Heart right ventricle (tissue), 16 donors: ENCODE measurements at regions of chr7 and their contacts with region 1.

Region 1: DNA sequence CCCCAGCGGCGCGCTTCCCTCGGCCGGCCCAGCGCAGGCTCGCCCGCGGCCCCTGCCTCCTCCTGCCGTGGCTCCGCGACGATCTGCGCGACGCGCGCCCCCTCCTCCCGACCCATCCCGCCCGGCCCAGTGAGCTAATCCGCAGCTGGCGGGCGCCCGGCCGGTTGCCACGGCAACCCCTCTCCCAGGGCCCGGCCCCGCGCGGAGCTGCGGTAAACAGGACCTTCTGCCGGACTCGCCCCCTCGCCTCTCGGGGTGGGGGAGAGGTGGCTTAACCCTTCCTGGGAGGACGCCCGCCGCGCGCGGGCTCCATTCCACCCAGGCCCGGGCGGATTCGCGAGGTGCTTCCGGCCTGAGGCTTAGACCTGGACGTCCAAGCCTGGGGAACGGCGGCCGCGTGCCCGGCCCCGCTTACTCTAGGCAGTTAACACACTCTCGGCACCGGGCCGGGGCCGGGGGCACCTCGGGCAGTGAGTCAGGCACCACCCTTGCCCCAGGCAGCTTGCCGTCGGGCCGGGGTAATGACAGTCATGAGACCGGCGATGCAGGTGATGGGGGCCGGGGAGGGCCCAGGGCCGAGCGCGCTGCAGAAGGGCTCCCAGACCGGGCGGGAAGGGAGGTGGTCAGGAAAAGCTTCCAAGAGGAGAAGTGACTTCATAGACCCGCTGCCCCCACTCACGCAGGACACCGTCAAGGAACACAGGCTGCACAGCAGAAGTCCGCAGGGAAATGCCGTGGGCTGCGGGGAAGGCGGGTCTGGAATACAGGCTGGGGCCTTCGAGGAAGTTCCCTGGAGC is at the start of gene DENND2A:
- DNase-seq: peak; percentile 82 to 87
- ATAC-seq: peak; percentile 60 to 81 (median 75)
- H3K4me3 ChIP-seq: peak within 1 kb of the TSS; percentile 62 to 82 (median 70)
- H3K27ac ChIP-seq: peak within 1 kb of the TSS; percentile 88 to 98 (median 93)
- H3K4me1 ChIP-seq: peaks cover 5 to 55% (median 38%) of the 10 kb centered on the region in 9 donors
- H3K27me3 ChIP-seq: peaks cover 0 to 60% (median 7%) of the 10 kb centered on the region in 7 donors
- CTCF ChIP-seq: no peak
- total RNA-seq, gene DENND2A: 6.9 to 16.9 (median 10.4) TPM

Region 2: DNA sequence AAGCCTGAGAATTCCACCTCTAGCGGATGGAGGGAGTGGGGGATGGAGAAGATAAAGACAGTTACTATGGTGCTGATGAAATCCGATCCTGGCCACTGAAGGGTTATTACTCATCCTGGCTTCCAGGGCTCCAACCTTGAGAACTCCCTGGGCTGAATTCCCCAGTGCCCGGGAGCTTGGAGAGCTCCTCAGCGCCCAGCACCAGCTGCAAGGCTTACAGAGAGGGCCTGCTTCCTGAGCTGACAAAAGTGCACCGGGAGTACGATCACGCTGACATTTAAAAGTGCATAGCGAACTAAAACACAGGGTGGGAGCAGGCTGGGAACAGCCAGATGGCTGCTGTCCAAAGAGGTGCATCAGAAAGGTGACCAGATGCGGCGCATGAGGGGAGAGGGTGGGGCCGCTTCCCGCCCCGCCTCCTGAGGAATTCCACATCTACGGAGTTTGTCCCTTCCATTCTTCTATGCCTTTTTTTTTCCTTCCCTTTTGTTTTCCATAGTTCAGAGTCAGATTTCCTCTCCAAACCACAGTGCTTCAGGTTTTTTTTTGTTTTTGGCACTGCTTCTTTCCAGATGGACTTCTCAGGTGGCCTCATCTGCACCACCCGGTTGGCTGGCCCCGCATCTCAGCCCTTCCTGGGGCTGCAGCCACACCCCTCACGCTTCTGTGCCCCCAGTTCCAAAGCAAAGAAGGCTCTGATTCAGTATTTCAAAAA is 99.3 kb before region 1 on chr7:
- intact Hi-C with region 1: loop called in 2 of 10 experiments (anchors 5 kb)
- DNase-seq: peak; percentile 38 to 66
- ATAC-seq: peak; percentile 60 to 93 (median 84)
- H3K4me3 ChIP-seq: peak overlapping the region in 6 of 10 donors; percentile 2 to 16 (median 3)
- H3K27ac ChIP-seq: peak overlapping the region; percentile 49 to 89 (median 66)
- H3K4me1 ChIP-seq: peaks cover 12 to 33% (median 21%) of the 10 kb centered on the region in 9 donors
- H3K27me3 ChIP-seq: no peaks in the 10 kb centered on the region
- CTCF ChIP-seq: no peak

Region 3: GRCh38 chr7:140596519-140597427 is 44.2 kb before region 1 on chr7:
- intact Hi-C with region 1: loop called in 6 of 10 experiments (anchors 5 to 10 kb)
- DNase-seq: no peak
- ATAC-seq: peak in 3 of 8 donors; percentile 10 to 39 (median 31)
- H3K4me3 ChIP-seq: no peak overlapping the region
- H3K27ac ChIP-seq: peak overlapping the region in 8 of 10 donors; percentile 10 to 72 (median 55)
- H3K4me1 ChIP-seq: peaks cover 0 to 48% (median 11%) of the 10 kb centered on the region in 9 donors
- H3K27me3 ChIP-seq: no peaks in the 10 kb centered on the region
- CTCF ChIP-seq: no peak

Region 4: DNA sequence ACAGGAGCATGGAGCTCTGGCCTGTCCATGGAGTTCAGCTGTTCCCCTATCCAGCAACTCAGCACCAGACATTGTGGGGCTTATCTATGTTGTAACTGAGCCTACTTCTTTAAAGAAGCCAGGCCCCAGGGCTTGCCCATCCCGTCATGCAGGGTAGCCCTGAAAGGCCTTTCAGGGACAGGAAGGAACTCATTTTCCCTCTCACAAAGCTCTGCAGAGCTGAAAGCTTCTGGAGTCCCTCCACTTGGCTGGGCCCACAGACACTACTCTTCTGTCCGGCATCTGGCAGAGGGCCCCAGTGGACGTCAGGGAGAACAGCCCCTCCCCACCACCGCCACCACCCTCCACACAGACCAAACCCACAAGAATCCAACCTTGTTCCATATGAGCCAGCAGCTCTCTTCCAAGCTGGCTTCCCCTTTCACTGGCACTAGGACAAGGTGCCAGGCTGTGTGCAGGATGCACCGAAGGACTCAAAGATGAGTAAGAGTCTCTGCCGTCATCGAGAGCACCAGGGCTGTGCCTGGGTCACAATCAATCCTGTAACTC is 33.4 kb before region 1 on chr7:
- intact Hi-C with region 1: loop called in 3 of 10 experiments (anchors 5 kb)
- DNase-seq: peak; percentile 79 to 81
- ATAC-seq: peak; percentile 80 to 92 (median 85)
- H3K4me3 ChIP-seq: peak overlapping the region in 1 of 10 donors; percentile 16
- H3K27ac ChIP-seq: peak overlapping the region in 9 of 10 donors; percentile 6 to 70 (median 67)
- H3K4me1 ChIP-seq: peaks cover 6 to 63% (median 40%) of the 10 kb centered on the region in 9 donors
- H3K27me3 ChIP-seq: no peaks in the 10 kb centered on the region
- CTCF ChIP-seq: no peak